K562 (cell line): ENCODE measurements at regions of chr15 and their contacts with region 1.

Region 1: GRCh38 chr15:75718321-75718720 is 5.7 kb upstream of the CSPG4 start:
- DNase-seq: no peak
- ATAC-seq: no peak
- H3K4me3 ChIP-seq: no peak overlapping the region
- H3K27ac ChIP-seq: no peak overlapping the region
- H3K4me1 ChIP-seq: peaks cover 12 to 22% of the 10 kb centered on the region in 2 experiments; a peak in 4 of 5 replicates
- H3K27me3 ChIP-seq: 0 out of 5 replicates have a peak, but pooled peaks cover 0 to 6% of the 10 kb centered on the region in 2 experiments
- CTCF ChIP-seq: no peak
- EP300 ChIP-seq: no peak
- POLR2A ChIP-seq: no peak
- RAD21 ChIP-seq: no peak

Region 2: DNA sequence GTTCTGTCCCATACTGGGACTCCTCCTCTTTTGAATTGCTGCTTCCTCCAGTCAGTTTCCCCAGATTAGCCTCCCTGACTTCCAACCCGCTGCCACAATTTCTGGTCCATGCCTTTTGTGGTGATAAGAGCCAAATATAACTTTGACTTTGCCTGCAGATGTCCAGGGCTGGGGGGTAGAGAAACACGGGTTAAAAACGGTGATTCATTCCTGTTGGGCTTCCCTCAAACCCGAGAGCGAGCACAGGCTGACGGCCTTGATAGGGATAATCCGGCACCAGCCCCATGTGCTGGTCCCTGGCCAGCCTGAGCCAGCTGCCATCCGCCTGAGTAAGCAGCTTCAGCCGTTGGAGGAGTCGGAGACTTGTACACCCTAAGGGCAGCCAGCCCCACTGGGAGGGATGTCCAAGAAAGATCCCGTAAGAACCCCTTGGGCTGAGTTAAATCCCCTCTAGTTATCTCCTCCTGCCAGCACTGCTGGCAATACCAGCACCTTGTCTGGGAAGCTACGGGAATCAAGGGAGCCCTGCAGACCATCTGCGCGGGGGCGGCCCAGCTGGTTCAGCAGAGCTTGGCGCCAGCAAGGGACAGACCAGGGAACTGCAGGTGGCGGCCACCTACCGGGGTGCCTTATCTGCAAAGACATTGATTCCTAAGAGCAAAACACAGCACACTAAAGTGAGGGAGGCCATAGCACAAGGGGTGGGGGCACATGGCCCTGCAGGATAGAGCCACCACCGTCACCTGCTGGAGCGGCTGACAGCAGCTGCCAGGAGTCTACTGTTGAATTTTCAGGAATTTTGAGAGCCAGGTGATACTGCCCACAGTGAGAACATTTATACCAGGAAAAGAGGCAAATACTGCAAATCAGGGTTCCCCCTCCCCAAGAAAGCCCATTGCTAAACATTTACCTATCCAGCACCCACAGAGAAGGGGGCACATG is 23.8 kb before region 1 on chr15:
- CTCF ChIA-PET with region 1: no interaction called
- POLR2A ChIA-PET with region 1: interaction called, 3 read pairs
- in situ Hi-C with region 1: no loop called
- intact Hi-C with region 1: loop called (anchors 1 kb)
- DNase-seq: peak; percentile 89 to 95 (median 91)
- ATAC-seq: peak; percentile 94
- H3K4me3 ChIP-seq: no peak overlapping the region
- H3K27ac ChIP-seq: peak overlapping the region; percentile 39; the same call in 2 of the 3 replicates
- H3K4me1 ChIP-seq: peaks cover 19 to 46% of the 10 kb centered on the region in 2 experiments
- H3K27me3 ChIP-seq: peaks cover 0 to 5% of the 10 kb centered on the region in 2 experiments; a peak in 1 of 5 replicates
- CTCF ChIP-seq: peak; percentile 62 to 85 (median 67)
- EP300 ChIP-seq: peak; percentile 35; the same call in 1 of the 2 replicates
- POLR2A ChIP-seq: no peak
- RAD21 ChIP-seq: peak in 1 of 2 experiments; percentile 49; a peak in 2 of 4 replicates